ENCODE measurements at regions of chr15 and their contacts with region 1.

Region 1: GRCh38 chr15:85730001-85730820 is 64.5 kb downstream of the KLHL25 start:
- DNase-seq: peak in 1 of 2 experiments; percentile 29
- H3K4me3 ChIP-seq: no peak overlapping the region
- H3K27ac ChIP-seq: no peak overlapping the region
- H3K4me1 ChIP-seq: no peaks in the 10 kb centered on the region
- H3K27me3 ChIP-seq: no peaks in the 10 kb centered on the region
- CTCF ChIP-seq: peak; percentile 84

Region 2: DNA sequence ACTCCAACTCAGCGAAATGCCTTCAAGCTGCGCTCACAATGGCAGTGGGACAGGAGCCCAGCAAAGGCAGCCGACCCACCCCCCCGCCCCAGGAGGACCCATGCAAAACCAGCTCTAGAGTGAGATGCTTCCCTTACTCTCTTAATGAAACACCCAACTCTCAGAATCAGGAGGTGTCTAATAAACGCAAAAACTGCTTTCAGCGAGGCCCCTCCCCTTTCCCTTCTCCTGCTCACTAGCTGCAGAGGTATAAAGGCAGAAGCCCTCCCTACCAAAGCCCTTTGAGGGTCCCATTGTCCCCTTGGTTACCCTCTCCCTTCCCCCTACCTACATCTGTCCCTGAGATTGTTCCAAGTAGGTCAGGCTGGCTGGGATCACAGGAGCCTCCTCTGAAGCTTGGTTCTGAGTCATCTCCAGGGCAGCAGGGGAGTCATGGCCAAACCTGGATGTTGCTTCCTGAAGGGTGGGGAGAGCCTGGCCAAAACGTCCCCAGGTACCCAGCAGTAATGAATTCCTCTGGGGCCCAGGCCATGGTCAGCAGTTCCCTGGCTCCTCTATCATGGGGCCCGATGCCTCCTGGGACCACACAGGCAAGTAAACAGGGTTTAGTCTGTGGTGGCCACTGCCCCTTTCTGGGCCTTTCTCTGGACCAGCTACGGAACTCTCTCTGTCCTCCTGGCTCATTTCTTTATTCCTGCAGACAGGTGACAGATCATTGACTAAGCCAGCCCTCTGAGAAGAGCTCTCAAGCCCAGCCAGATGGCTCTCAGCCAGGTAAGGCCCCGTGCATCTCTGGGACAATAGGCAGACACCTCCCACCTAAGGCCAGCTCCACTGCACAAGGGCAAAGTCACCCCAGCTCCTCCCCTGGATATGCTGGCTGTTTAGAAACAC is 55.9 kb after region 1 on chr15:
- CTCF ChIA-PET with region 1: no interaction called
- POLR2A ChIA-PET with region 1: interaction called, 24 read pairs
- intact Hi-C with region 1: no loop called
- DNase-seq: peak; percentile 70
- H3K4me3 ChIP-seq: peak overlapping the region; percentile 17; the same call in 1 of the 2 replicates
- H3K27ac ChIP-seq: peak overlapping the region; percentile 75
- H3K4me1 ChIP-seq: peaks cover 54% of the 10 kb centered on the region
- H3K27me3 ChIP-seq: no peaks in the 10 kb centered on the region
- CTCF ChIP-seq: no peak

Region 3: GRCh38 chr15:85840065-85840801 is 110.0 kb after region 1 on chr15:
- CTCF ChIA-PET with region 1: no interaction called
- POLR2A ChIA-PET with region 1: no interaction called
- intact Hi-C with region 1: loop called (anchors 1 kb)
- DNase-seq: peak; percentile 62 to 86
- H3K4me3 ChIP-seq: peak overlapping the region; percentile 30; the same call in 1 of the 2 replicates
- H3K27ac ChIP-seq: no peak overlapping the region
- H3K4me1 ChIP-seq: peaks cover 12% of the 10 kb centered on the region
- H3K27me3 ChIP-seq: peaks cover 4% of the 10 kb centered on the region; the same call in 1 of the 2 replicates
- CTCF ChIP-seq: peak; percentile 92

Measured in PC-9 (cell line).